ENCODE measurements at regions of chr7 and their contacts with region 1.

Region 1: DNA sequence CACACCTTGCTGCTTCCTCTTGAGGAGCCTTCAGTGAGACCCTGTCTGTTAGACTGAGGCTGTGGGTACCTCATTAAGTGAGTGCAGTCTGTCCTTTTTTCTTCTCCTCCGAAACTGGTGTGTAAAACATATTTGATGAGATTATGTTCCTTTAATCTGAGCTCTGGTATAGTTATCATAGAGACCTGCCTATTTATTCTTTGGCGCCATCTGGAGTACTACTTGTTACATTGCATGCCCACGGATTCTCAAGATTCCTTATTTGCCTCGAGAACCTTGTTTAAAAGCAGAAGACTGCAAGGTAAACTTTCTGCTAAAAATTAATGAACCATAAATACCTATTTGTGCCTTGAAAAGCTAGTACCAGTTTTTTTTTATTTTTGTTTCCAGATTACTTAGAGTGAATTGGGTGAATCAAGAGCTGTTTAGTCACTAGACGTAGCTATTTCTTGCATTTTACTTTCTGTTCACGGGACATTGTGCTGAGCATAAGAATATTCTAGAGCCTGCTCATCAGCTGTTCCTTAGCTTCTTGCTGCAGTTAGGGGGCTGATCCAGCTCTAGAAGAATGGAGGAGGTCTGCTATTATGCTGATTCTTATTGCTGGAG is 16.9 kb upstream of the STMP1 start:
- DNase-seq: no peak
- ATAC-seq: peak; percentile 53
- H3K4me3 Mint-ChIP-seq: no peak overlapping the region
- H3K27ac Mint-ChIP-seq: no peak overlapping the region
- H3K4me1 Mint-ChIP-seq: peaks cover 3% of the 10 kb centered on the region
- H3K27me3 Mint-ChIP-seq: no peaks in the 10 kb centered on the region

Region 2: DNA sequence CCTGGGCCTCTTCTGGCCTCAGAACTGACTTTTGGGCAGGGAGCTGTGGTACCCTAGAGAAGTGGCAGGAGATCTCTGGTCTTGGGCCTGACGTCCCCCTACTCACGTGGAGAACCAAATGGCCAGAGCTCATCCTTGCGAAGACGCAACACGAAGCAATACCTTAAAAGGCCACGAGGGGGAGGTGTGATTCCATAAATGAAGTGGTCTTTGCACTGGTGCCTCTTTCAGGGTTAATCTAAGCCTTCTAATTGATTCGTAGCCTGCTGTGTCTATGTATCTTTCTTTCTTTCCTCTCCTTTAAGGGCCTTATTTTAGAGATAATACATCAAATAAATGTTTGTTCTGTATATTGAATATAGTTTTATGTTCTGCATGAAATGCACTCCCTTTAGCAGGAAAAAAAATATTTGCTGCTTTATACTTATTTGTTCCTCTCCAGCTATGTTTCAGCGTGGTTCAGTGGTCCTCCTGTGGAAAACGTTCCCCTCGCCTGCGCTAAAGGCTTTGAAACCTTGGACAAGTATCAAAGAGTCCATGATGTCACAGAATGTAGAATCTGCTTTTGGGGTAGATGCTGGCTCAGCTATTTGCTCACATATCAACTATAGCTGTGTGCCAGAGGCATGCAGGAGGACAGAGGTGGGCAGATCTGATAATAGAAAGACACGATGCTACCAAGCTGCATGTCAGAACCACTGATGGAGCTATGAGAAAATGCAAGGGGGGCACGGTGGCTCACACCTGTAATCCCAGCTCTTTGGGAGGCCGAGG is 370.7 kb before region 1 on chr7:
- CTCF ChIA-PET with region 1: interaction called, 41 read pairs
- DNase-seq: peak; percentile 80
- ATAC-seq: peak; percentile 81
- H3K4me3 Mint-ChIP-seq: no peak overlapping the region
- H3K27ac Mint-ChIP-seq: no peak overlapping the region
- H3K4me1 Mint-ChIP-seq: no peaks in the 10 kb centered on the region
- H3K27me3 Mint-ChIP-seq: peaks cover 12% of the 10 kb centered on the region

Region 3: DNA sequence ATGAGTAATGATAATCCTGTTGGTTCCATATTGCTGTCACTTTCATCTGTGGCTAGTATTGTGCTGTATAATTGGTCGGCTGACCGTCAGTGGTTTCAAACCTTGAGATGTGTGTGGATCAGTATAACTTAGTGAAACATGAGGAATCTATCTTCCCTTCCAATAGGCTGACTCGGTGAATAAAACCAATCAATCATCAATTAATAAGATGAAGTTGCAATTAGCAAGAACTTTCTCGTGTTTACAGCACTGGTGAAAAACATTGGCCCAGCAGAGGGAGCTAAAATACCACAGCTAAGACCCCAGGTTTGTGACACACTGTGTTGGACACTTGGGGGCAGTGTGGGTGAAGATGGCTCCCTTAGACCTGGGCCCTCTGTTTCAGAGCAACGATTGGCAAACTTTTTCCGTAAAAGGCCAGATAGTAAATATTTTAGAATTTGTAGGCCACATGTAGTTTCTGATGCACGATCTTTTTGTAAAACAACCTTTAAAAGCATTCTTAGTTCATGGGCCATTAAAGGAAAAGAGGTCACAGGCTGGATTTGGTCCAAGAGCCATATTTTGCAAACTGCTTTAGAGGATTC is 363.9 kb before region 1 on chr7:
- CTCF ChIA-PET with region 1: interaction called, 41 read pairs
- DNase-seq: peak; percentile 89
- ATAC-seq: peak; percentile 99
- H3K4me3 Mint-ChIP-seq: no peak overlapping the region
- H3K27ac Mint-ChIP-seq: no peak overlapping the region
- H3K4me1 Mint-ChIP-seq: peaks cover 20% of the 10 kb centered on the region
- H3K27me3 Mint-ChIP-seq: peaks cover 19% of the 10 kb centered on the region

Region 4: DNA sequence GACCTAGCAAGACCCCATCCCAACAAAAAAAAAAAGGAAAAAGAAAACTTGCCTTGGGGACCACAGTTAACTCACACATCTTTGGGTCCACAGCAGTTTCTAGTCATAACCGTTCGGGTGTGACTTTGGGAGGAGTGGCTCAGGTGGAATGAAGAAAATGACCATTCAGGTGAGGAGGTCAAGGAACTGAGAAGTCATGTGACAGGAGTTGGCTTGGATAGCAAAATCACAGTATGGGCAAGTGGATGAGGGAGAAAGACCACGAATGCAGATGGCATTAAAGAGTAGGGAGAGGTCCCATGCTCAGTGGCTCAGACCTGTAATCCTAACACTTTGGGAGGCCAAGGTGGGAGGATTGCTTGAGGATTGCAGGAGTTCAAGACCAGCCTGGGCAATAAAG is 118.4 kb before region 1 on chr7:
- CTCF ChIA-PET with region 1: no interaction called
- DNase-seq: no peak
- ATAC-seq: no peak
- H3K4me3 Mint-ChIP-seq: no peak overlapping the region
- H3K27ac Mint-ChIP-seq: no peak overlapping the region
- H3K4me1 Mint-ChIP-seq: no peaks in the 10 kb centered on the region
- H3K27me3 Mint-ChIP-seq: peaks cover 24% of the 10 kb centered on the region

Region 5: DNA sequence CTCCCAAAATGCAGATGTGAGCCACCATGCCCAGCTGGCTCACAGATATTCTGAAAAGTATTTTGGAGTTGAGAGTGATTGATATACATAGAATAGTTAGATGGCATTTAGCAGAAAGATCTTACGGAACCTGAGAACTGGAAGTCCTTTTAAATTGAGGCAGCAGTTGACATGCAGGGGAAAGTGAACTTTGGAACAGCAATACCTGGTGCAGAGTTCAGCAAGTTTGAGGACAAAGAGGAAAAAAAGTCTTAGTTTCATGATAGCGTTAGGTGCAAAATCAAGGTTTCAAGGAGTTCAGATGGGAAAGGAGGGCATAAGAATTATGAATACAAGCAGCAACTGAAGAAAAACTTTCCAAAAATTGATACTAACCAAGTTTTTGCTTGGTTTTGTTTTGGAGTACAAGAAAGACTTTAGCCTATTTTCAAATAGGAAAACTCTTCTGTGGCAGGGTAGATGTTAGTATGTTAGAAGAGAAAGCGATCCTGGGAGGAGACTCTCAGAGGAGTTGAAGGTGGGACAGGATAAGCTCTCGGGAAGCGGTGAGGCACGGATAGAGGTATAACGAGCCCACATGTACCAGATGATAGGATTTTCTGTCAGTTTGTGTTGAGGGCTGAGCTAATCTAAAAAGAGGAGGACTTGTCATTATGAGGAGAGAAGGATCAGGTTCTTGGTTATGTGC is 11.1 kb before region 1 on chr7:
- CTCF ChIA-PET with region 1: interaction called, 17 read pairs
- DNase-seq: no peak
- ATAC-seq: no peak
- H3K4me3 Mint-ChIP-seq: no peak overlapping the region
- H3K27ac Mint-ChIP-seq: no peak overlapping the region
- H3K4me1 Mint-ChIP-seq: no peaks in the 10 kb centered on the region
- H3K27me3 Mint-ChIP-seq: no peaks in the 10 kb centered on the region

Region 6: DNA sequence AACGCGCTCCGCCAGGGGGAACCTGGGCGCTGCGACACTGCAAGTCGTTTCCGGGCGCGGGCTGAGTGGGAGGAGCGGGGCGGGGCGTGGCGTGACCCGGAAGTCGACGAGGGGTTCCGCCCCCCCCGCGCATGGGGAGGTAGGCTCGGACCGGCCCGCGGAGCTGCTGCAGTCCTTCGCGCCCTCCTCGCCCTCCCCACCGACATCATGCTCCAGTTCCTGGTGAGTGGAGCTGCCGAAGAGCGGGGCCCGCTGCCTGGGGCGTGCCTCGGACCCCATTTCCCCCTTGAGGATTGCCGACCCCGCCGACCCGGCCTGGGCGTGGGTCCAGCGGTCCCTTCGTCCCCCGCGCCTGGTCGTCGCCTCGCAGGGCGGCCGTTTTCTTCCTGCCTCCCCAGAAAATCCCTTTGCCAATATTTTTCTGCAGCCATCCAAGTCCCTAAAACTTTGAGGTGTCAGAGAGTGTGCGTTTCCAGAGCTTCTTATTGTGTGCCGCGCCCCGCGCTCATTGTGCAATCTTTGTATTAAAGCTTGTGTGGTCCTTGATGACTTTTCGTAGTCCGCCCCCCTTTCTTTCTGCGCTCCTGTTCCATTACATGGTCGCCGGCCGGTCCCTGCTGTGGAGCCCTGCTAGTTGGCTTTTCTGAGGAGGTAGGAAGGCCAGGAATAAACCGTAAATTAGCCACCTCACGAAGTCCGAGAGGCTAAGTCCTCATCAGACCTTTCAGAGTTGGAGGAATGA is 17.1 kb after region 1 on chr7 and contains the start of gene STMP1:
- CTCF ChIA-PET with region 1: interaction called, 35 read pairs
- DNase-seq: peak; percentile 96
- ATAC-seq: peak; percentile 98
- H3K4me3 Mint-ChIP-seq: peak within 1 kb of the TSS; percentile 90
- H3K27ac Mint-ChIP-seq: peak within 1 kb of the TSS; percentile 86
- H3K4me1 Mint-ChIP-seq: peaks cover 33% of the 10 kb centered on the region
- H3K27me3 Mint-ChIP-seq: no peaks in the 10 kb centered on the region
- total RNA-seq, gene STMP1: 14.4 to 17.5 TPM